ENCODE measurements at regions of chr18 and their contacts with region 1.

Region 1: DNA sequence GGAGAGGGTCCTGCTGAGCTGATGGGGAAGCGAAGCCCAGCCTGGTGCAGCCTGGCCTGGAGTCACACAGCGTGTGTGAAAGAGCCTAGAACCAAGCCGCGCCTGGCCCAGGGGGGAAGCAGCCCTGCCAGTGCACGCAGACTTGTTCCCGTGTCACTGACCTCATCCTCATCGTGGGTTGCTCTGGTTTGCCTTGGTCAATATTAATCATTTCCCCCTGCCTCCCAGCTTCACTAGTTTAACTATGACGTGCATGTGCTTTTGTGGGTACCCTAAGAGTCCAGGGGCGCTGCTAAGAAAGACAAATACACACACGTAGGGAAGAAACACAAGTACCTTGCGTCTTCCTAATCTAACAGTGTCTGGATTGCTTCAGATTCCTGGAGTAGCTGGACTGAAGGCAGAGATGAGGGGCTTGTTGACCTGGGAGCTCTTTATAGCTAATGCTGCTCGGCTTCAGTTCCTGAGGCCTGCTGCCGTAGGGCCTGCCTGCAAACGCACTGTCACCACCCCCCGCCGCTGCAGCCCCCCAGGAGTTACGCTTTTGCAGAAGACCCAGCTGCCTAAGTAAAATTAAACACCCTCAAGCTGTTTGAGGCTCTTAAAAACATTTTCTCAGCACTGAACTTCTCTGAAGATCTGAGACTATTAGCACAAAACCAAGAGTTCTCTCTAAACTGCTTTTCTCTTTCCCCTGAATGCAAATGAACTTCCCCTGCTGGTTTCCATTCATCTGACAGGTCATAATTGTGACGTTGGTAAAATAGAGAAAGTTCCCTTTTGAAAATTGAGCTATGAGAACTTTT is 159.2 kb downstream of the FAM210A start:
- DNase-seq: peak in 2 of 9 donors; percentile 9 to 20
- ATAC-seq: peak; percentile 75
- H3K4me3 ChIP-seq: no peak overlapping the region
- H3K4me3 Mint-ChIP-seq: peak overlapping the region in 8 of 10 donors; percentile 7 to 56 (median 22)
- H3K27ac ChIP-seq: no peak overlapping the region
- H3K27ac Mint-ChIP-seq: peak overlapping the region in 4 of 9 donors; percentile 43 to 84 (median 60)
- H3K4me1 ChIP-seq: peaks cover 0 to 6% of the 10 kb centered on the region in 2 donors
- H3K4me1 Mint-ChIP-seq: peaks cover 21 to 67% (median 43%) of the 10 kb centered on the region in 7 donors
- H3K27me3 ChIP-seq: no peaks in the 10 kb centered on the region
- H3K27me3 Mint-ChIP-seq: no peaks in the 10 kb centered on the region

Region 2: DNA sequence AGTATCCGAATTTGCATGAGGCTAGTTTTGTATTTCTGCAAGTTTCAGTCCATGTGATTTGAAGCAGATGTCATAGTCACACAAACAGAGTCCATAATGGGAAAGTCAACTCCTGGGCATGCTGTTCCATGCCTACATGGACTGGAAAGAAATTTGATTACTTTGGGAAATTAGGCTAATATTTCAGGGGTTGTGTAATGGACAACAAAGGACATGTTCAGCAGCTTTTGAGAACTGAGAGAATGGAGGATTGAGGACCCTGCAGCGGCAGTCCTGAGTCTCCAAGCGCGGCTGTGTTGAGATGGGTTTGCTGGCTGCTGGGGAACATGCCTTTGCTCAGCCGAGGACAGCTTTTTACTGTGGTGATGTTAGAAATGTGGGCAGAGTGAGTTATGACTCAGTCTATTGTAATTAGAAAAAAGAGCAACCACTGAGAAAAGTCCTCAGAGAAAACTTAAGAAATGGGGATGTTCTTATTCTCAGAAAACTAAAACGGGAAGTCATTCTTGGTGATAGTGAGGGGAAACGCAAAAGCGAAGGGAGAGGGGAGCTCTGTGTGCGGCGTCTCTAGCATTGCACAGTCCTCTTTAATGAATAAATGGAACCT is 10.1 kb after region 1 on chr18:
- CTCF ChIA-PET with region 1: no interaction called
- POLR2A ChIA-PET with region 1: no interaction called
- intact Hi-C with region 1: loop called in 1 of 2 experiments (anchors 1 kb)
- DNase-seq: no peak
- ATAC-seq: peak; percentile 80
- H3K4me3 ChIP-seq: no peak overlapping the region
- H3K4me3 Mint-ChIP-seq: peak overlapping the region; percentile 34 to 76 (median 59)
- H3K27ac ChIP-seq: no peak overlapping the region
- H3K27ac Mint-ChIP-seq: peak overlapping the region; percentile 7 to 90 (median 52)
- H3K4me1 ChIP-seq: peaks cover 5 to 13% of the 10 kb centered on the region in 2 donors
- H3K4me1 Mint-ChIP-seq: peaks cover 36 to 60% (median 55%) of the 10 kb centered on the region in 7 donors
- H3K27me3 ChIP-seq: no peaks in the 10 kb centered on the region
- H3K27me3 Mint-ChIP-seq: no peaks in the 10 kb centered on the region